Cardiac septum (tissue), 1 donor: ENCODE measurements at regions of chr9 and their contacts with region 1.

Region 1: GRCh38 chr9:14322211-14323082 is 8.5 kb upstream of the NFIB start:
- DNase-seq: peak; percentile 94

Region 2: DNA sequence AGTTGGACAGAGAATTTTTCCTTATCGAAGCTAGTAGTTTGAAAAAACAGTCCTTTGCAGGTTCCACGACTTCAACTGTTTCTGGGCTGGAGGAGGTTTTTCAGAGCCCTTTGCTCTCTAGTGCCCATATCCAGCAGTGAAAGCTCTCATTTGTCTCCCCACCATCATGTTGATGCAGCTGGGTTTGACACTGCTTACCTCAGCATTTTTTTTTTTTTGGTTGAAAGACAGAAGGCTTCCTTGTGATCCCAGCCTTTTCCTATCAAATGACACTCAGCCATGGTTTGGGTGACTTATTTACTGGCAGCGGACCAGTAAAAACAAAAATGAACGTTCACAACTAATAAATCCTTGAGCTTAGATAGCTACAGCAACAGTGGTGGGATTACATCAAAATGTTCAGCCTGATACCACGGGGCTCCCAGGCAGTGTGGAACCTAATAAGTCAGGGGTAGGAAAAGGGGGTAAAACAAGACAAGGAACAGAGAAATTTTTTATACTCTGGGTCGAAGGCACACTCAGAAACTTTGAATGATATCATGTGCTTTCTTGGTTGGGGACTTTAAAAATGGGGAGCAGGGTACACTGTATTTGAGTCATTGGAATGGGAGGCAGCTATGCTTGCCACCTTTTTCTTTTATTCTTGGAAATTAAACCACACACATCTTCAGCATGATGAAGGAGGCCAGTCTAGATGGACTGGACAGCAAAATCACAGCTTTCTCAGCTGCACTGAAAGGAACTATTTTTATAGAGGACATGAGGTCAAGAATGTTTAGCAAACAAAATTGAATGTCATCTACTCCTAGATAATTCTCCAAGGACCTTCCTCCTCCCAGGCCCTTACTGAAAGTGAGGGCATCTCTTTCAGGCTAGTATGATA is 734.1 kb before region 1 on chr9:
- intact Hi-C with region 1: loop called (anchors 5 kb)
- DNase-seq: no peak

Region 3: DNA sequence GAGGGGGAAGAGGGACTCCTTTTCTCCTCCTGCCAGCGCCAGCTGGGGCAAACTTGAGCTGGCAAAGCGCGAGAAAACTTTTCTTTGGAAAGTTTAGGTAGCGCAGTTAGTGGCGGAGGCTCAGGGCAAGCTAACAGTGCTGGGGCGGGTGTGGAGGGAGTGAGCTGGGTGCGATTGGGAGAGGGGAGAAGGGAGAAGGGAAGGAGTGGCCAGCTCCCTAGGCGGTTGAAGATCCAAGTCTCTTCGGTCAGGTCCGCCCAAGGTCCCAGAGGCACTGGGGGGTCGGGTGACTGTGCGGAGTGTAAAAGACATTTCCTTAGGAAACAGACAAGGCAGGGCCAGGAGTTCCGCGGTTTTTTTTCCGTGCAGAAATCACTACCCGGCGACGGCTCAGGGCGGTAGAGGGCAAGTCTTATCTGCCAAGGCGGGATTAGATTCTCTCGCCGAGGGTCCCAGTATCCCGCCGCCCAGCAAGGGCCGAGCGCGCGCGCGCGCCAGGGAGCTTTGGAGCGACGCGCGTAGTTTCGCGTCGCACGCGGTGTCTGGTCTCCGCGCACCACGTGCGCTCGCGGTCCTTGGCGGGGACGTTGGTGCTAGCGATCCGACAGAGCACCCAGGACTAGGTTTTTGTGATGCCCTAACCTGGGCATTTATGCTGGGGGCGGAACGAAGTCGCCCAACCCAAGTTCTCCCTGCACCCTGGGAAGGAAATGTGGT is 25.1 kb after region 1 on chr9:
- intact Hi-C with region 1: loop called (anchors 1 kb)
- DNase-seq: peak; percentile 78